ENCODE measurements at regions of chr15 and their contacts with region 1.

Region 1: DNA sequence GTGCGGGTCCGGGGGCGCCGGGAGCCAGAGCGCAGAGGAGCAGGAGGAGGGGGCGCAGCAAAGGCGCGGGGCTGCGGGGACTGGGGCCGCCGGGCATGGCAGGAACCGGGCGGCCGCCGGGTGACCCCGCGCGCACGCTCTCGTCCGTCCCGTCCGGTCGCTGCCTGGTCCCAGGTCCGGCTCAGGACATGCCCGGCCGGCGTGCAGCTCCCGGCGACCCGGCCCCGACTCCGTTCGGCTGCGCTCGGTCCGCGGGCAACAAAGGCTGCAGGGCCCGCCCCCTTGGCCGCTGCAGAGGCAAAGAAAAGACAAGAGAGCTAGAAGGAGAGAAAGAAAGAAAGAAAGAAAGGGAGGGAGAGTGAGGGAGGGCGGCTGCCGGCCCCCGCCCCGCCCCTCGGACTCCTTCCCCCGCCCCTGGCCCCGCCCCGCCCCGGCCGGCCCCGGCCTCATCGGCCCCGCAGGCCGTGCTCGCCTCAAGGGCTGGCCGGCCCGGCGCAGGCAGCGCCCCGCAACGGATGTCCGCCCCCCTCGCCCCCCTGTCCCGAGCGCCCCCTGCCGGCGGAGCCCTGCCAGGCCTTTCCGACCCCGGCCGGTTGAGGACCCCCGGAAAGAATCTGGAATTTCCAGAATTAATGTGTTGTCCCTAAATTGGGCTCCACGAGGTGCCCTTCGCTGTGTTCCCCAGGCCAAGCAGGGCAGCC is at the start of gene ADAMTS7:
- DNase-seq: peak; percentile 90
- ATAC-seq: peak; percentile 91
- total RNA-seq, gene ADAMTS7: 16.6 TPM

Region 2: GRCh38 chr15:78750566-78750965 is 60.7 kb before region 1 on chr15:
- intact Hi-C with region 1: loop called (anchors 2 kb)
- DNase-seq: no peak
- ATAC-seq: peak; percentile 25

Measured in sciatic nerve (tissue), 2 donors.